ENCODE measurements at regions of chr16 and their contacts with region 1.

Region 1: GRCh38 chr16:69166221-69166833 is 20.6 kb upstream of the SNTB2 start:
- DNase-seq: no peak
- H3K4me3 ChIP-seq: no peak overlapping the region
- H3K27me3 ChIP-seq: no peaks in the 10 kb centered on the region
- CTCF ChIP-seq: no peak

Region 2: GRCh38 chr16:69150146-69150865 is 16.0 kb before region 1 on chr16:
- CTCF ChIA-PET with region 1: interaction called, 28 read pairs
- POLR2A ChIA-PET with region 1: no interaction called
- DNase-seq: no peak
- H3K4me3 ChIP-seq: no peak overlapping the region
- H3K27me3 ChIP-seq: no peaks in the 10 kb centered on the region
- CTCF ChIP-seq: peak; percentile 73

Region 3: DNA sequence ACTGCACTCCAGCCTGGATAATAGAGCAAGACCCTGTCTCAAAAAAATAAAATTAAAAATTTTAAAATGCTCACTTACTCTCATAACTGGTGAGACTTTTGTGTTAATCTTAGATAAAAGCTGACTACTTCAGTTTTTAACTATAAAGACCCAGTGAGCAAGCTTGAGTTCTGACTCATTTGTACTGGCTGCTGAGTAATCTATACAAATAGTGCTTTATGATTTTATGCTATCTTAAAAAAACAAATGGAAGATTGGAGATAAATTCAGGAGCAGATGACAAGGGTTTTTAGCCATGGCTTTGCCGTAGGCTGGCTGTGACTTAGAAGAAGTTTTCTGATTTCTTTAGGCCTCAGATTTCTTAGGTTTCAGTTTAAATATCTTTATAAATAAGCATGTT is 51.1 kb after region 1 on chr16:
- CTCF ChIA-PET with region 1: no interaction called
- POLR2A ChIA-PET with region 1: no interaction called
- DNase-seq: no peak
- H3K4me3 ChIP-seq: no peak overlapping the region
- H3K27me3 ChIP-seq: no peaks in the 10 kb centered on the region
- CTCF ChIP-seq: no peak

Measured in BJ (cell line).